ENCODE measurements at regions of chr11 and their contacts with region 1.

Region 1: DNA sequence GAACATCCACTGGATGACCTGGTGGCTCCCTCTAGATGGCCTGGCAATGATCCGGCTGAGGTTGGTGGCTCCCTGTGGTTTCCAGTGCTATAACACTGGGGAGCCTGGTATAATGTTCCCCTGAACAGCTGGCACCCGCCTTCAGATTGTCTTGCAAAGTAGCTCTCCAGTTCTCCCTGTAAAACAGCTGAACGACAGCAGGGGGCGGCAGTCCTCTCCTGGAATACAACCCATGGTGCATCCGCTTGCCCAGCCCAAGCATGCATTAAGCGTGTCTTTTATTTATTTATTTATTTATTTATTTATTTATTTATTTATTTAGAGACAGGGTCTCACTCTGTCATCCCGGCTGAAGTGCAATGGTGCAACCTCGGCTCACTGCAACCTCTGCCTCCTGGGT is 258.9 kb downstream of the BUD13 start:
- DNase-seq: peak; percentile 47 to 89
- H3K4me3 ChIP-seq: no peak overlapping the region
- H3K27ac ChIP-seq: no peak overlapping the region
- H3K4me1 ChIP-seq: peaks cover 0 to 8% (median 2%) of the 10 kb centered on the region in 4 experiments; a peak in 3 of 7 replicates
- H3K27me3 ChIP-seq: peaks cover 0 to 4% (median 0%) of the 10 kb centered on the region in 4 experiments; a peak in 2 of 7 replicates
- CTCF ChIP-seq: peak; percentile 61 to 69 (median 65)
- EP300 ChIP-seq: no peak
- POLR2A ChIP-seq: no peak
- RAD21 ChIP-seq: peak; percentile 62 to 76

Region 2: DNA sequence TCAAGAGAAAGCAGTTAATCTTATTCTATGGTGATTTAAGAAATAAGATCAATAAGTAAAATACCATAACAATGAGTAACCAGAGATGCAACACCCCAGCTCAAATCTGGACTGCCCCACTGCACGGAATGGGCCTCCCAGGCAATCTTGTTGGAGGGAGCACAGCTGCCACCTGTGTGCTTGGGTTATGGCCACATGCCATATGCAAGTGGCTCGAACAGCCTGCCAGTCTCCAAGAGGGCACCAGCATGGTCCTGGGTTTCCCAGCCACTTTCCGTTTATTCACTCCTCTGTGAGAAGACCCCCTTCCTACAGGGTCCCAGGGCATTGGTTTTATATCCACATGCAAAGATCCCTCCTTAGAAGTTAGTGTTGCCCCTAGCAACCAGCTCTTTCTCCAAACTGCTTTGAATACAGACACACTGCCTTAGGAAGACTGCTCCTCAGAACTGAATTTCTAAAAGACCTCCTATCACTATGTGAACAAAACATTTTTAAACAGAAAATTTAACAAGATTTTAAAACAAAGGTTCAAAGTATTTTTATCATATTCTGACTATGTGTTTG is 228.9 kb before region 1 on chr11:
- CTCF ChIA-PET with region 1: no interaction called
- POLR2A ChIA-PET with region 1: no interaction called
- DNase-seq: no peak
- H3K4me3 ChIP-seq: no peak overlapping the region
- H3K27ac ChIP-seq: no peak overlapping the region
- H3K4me1 ChIP-seq: no peaks in the 10 kb centered on the region
- H3K27me3 ChIP-seq: no peaks in the 10 kb centered on the region
- CTCF ChIP-seq: no peak
- EP300 ChIP-seq: no peak
- POLR2A ChIP-seq: no peak
- RAD21 ChIP-seq: no peak

Region 3: GRCh38 chr11:116439361-116439677 is 74.6 kb before region 1 on chr11:
- CTCF ChIA-PET with region 1: no interaction called
- POLR2A ChIA-PET with region 1: no interaction called
- DNase-seq: no peak
- H3K4me3 ChIP-seq: no peak overlapping the region
- H3K27ac ChIP-seq: no peak overlapping the region
- H3K4me1 ChIP-seq: peaks cover 0 to 5% (median 3%) of the 10 kb centered on the region in 4 experiments; a peak in 4 of 7 replicates
- H3K27me3 ChIP-seq: no peaks in the 10 kb centered on the region
- CTCF ChIP-seq: no peak
- EP300 ChIP-seq: no peak
- POLR2A ChIP-seq: no peak
- RAD21 ChIP-seq: no peak

Region 4: GRCh38 chr11:116525961-116526495 is 12.1 kb after region 1 on chr11:
- CTCF ChIA-PET with region 1: interaction called, 96 read pairs
- POLR2A ChIA-PET with region 1: no interaction called
- DNase-seq: no peak
- H3K4me3 ChIP-seq: no peak overlapping the region
- H3K27ac ChIP-seq: no peak overlapping the region
- H3K4me1 ChIP-seq: no peaks in the 10 kb centered on the region
- H3K27me3 ChIP-seq: peaks cover 0 to 3% (median 0%) of the 10 kb centered on the region in 4 experiments; a peak in 1 of 7 replicates
- CTCF ChIP-seq: no peak
- EP300 ChIP-seq: no peak
- POLR2A ChIP-seq: no peak
- RAD21 ChIP-seq: no peak

Region 5: GRCh38 chr11:116533186-116533825 is 19.4 kb after region 1 on chr11:
- CTCF ChIA-PET with region 1: interaction called, 96 read pairs
- POLR2A ChIA-PET with region 1: no interaction called
- DNase-seq: peak in 1 of 2 experiments; percentile 83
- H3K4me3 ChIP-seq: no peak overlapping the region; a peak in 1 of 8 replicates
- H3K27ac ChIP-seq: no peak overlapping the region
- H3K4me1 ChIP-seq: peaks cover 0 to 4% (median 1%) of the 10 kb centered on the region in 4 experiments; a peak in 2 of 7 replicates
- H3K27me3 ChIP-seq: peaks cover 0 to 3% (median 0%) of the 10 kb centered on the region in 4 experiments; a peak in 3 of 7 replicates
- CTCF ChIP-seq: peak; percentile 62 to 73 (median 63)
- EP300 ChIP-seq: no peak
- POLR2A ChIP-seq: no peak
- RAD21 ChIP-seq: peak; percentile 86 to 90

Region 6: GRCh38 chr11:116553482-116553881 is 39.6 kb after region 1 on chr11:
- CTCF ChIA-PET with region 1: interaction called, 11 read pairs
- POLR2A ChIA-PET with region 1: no interaction called
- DNase-seq: no peak
- H3K4me3 ChIP-seq: no peak overlapping the region
- H3K27ac ChIP-seq: no peak overlapping the region
- H3K4me1 ChIP-seq: no peaks in the 10 kb centered on the region
- H3K27me3 ChIP-seq: peaks cover 0 to 2% (median 0%) of the 10 kb centered on the region in 4 experiments; a peak in 2 of 7 replicates
- CTCF ChIP-seq: peak in 2 of 3 experiments; percentile 24 to 36; a peak in 3 of 4 replicates
- EP300 ChIP-seq: no peak
- POLR2A ChIP-seq: no peak
- RAD21 ChIP-seq: peak; percentile 22 to 42; a peak in 3 of 4 replicates

Region 7: DNA sequence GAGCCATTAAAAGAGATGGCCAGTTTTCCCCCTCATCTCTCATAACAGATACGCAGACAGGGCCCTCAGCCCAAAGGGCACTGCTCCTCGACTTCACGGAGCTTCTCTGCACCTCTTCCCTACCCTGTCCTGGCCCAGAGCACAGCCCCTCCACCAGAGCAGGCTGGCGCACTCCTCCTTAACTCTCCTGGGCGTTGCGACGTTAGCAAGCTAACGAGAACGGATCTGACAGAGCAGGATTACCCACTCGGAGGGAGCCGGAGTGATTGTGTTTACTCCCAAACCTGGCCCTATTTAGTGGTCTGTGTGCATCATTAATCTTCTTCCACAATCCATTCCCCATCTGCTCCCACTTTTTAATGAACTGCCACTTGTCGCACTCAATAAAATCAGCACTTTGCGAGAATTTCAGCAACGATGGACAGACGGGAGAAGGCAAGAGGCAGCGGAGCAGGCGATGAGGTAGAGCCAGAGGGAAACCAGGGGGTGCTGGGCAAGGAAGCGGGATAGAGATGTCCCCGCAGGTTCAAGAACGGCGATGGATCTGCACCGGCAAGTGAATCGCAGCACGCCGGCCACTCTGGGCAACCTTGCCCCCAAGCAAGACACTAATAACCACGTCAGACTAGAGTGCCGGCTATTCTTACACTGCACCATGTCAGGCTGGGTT is 99.4 kb after region 1 on chr11:
- CTCF ChIA-PET with region 1: interaction called, 12 read pairs
- POLR2A ChIA-PET with region 1: no interaction called
- DNase-seq: no peak
- H3K4me3 ChIP-seq: no peak overlapping the region
- H3K27ac ChIP-seq: no peak overlapping the region
- H3K4me1 ChIP-seq: 0 out of 7 replicates have a peak, but pooled peaks cover 0 to 2% (median 0%) of the 10 kb centered on the region in 4 experiments
- H3K27me3 ChIP-seq: no peaks in the 10 kb centered on the region
- CTCF ChIP-seq: no peak
- EP300 ChIP-seq: no peak
- POLR2A ChIP-seq: no peak
- RAD21 ChIP-seq: no peak